ENCODE measurements at regions of chr15 and their contacts with region 1.

Region 1: DNA sequence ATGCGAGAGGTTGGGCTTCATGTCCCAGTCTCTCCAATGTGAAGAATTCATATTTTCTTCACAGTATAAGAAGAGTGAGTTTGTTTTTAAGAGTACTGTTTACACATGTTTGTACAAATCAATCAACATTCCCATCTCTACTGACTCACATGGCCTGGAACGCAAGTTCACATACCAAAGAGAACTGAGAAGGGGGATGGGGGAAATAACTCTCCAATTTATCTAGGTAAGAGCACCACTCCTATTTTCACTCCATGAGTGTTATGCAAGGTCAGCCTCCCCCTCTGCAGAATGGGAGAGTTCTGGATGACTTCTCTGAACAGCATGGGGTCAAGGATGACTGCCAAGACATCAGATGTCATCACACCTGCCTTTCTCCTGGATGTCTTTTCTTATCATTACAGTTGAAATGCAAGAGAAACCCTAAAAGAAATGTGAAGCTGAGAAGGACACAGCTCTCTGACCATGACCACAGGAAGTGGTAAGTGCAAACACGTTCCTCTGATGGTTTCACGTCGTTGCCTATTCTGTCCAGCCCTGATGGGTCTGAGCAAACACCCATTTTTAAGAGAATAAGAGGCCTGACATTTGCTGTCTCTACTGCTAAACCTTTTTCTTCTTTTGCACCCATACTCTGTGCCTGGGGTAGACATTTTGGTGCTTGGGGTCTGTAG is 95.3 kb downstream of the SEMA6D start:
- DNase-seq: peak; percentile 32
- ATAC-seq: peak; percentile 85
- H3K4me3 ChIP-seq: no peak overlapping the region
- H3K27ac ChIP-seq: no peak overlapping the region
- H3K4me1 ChIP-seq: peaks cover 19% of the 10 kb centered on the region
- H3K27me3 ChIP-seq: no peaks in the 10 kb centered on the region
- CTCF ChIP-seq: no peak
- EP300 ChIP-seq: no peak
- POLR2A ChIP-seq: no peak
- RAD21 ChIP-seq: no peak

Region 2: DNA sequence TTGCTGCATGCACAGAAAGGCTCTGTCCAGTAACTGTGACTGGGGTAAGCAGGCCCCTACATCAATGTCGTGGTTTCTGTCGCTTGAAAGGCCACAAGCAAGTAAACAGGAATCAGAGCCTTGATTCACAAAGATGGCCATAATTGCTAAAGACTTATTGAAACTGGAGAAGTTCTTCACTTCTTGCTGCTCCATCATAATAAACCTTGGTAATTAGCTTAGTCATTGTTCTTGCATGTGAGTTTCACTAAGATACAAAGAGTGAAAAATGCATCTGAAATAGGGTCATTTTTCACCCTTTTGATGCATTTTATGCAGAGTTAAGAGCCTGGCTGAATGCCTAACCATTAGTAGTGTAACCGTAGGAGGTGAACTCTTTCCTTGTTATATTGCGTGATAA is 92.0 kb before region 1 on chr15:
- CTCF ChIA-PET with region 1: no interaction called
- POLR2A ChIA-PET with region 1: no interaction called
- RAD21 ChIA-PET with region 1: no interaction called
- SMC1A ChIA-PET with region 1: no interaction called
- in situ Hi-C with region 1: no loop called
- intact Hi-C with region 1: no loop called
- DNase-seq: no peak
- ATAC-seq: no peak
- H3K4me3 ChIP-seq: no peak overlapping the region
- H3K27ac ChIP-seq: no peak overlapping the region
- H3K4me1 ChIP-seq: no peaks in the 10 kb centered on the region
- H3K27me3 ChIP-seq: peaks cover 9 to 21% of the 10 kb centered on the region in 2 experiments
- CTCF ChIP-seq: no peak
- EP300 ChIP-seq: no peak
- POLR2A ChIP-seq: no peak
- RAD21 ChIP-seq: no peak

Region 3: DNA sequence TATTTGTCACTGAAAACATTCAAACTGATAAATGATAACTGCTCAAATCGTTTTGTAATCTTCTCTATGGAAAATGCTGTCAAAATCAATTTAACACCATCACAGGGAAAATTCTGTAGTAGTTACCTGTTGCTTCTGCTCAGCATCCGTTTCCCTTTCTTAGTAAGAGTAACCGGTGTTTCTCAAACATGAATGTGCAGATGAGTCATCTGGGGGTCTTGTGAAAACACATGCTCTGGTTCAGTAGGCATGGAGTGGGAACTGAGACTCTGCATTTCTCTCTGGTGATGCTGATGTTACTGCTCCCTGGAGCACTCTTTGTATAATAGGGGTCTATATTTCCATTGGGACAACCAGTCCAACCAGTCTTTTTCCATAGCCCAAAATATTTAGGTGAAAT is 49.8 kb after region 1 on chr15:
- CTCF ChIA-PET with region 1: no interaction called
- POLR2A ChIA-PET with region 1: no interaction called
- RAD21 ChIA-PET with region 1: no interaction called
- SMC1A ChIA-PET with region 1: no interaction called
- in situ Hi-C with region 1: no loop called
- intact Hi-C with region 1: loop called (anchors 5 kb)
- DNase-seq: peak; percentile 21
- ATAC-seq: peak; percentile 67
- H3K4me3 ChIP-seq: no peak overlapping the region
- H3K27ac ChIP-seq: no peak overlapping the region
- H3K4me1 ChIP-seq: no peaks in the 10 kb centered on the region
- H3K27me3 ChIP-seq: no peaks in the 10 kb centered on the region
- CTCF ChIP-seq: no peak
- EP300 ChIP-seq: no peak
- POLR2A ChIP-seq: no peak
- RAD21 ChIP-seq: no peak

Region 4: GRCh38 chr15:47961401-47962090 is 149.0 kb after region 1 on chr15:
- CTCF ChIA-PET with region 1: no interaction called
- POLR2A ChIA-PET with region 1: no interaction called
- RAD21 ChIA-PET with region 1: no interaction called
- SMC1A ChIA-PET with region 1: no interaction called
- in situ Hi-C with region 1: no loop called
- intact Hi-C with region 1: loop called (anchors 5 kb)
- DNase-seq: peak; percentile 80
- ATAC-seq: peak; percentile 95
- H3K4me3 ChIP-seq: peak overlapping the region; percentile 58
- H3K27ac ChIP-seq: peak overlapping the region; percentile 51
- H3K4me1 ChIP-seq: peaks cover 21% of the 10 kb centered on the region
- H3K27me3 ChIP-seq: no peaks in the 10 kb centered on the region
- CTCF ChIP-seq: no peak
- EP300 ChIP-seq: peak; percentile 60 to 63; a peak in 2 of 4 replicates
- POLR2A ChIP-seq: no peak
- RAD21 ChIP-seq: no peak

Region 5: GRCh38 chr15:48046813-48047438 is 234.4 kb after region 1 on chr15:
- CTCF ChIA-PET with region 1: no interaction called
- POLR2A ChIA-PET with region 1: no interaction called
- RAD21 ChIA-PET with region 1: no interaction called
- SMC1A ChIA-PET with region 1: no interaction called
- in situ Hi-C with region 1: no loop called
- intact Hi-C with region 1: no loop called
- DNase-seq: no peak
- ATAC-seq: no peak
- H3K4me3 ChIP-seq: no peak overlapping the region
- H3K27ac ChIP-seq: no peak overlapping the region
- H3K4me1 ChIP-seq: no peaks in the 10 kb centered on the region
- H3K27me3 ChIP-seq: no peaks in the 10 kb centered on the region
- CTCF ChIP-seq: no peak
- EP300 ChIP-seq: no peak
- POLR2A ChIP-seq: no peak
- RAD21 ChIP-seq: no peak

Measured in GM12878 (cell line).